Ascending aorta (tissue), 2 donors: ENCODE measurements at regions of chr15 and their contacts with region 1.

Region 1: GRCh38 chr15:46365572-46365971 is 730.7 kb downstream of the SQOR start:
- DNase-seq: peak in 1 of 2 donors; percentile 84
- H3K4me3 ChIP-seq: peak overlapping the region; percentile 29 to 51
- H3K27ac ChIP-seq: peak overlapping the region; percentile 76 to 77
- H3K4me1 ChIP-seq: peaks cover 0 to 16% of the 10 kb centered on the region in 2 donors
- H3K27me3 ChIP-seq: no peaks in the 10 kb centered on the region
- CTCF ChIP-seq: no peak

Region 2: DNA sequence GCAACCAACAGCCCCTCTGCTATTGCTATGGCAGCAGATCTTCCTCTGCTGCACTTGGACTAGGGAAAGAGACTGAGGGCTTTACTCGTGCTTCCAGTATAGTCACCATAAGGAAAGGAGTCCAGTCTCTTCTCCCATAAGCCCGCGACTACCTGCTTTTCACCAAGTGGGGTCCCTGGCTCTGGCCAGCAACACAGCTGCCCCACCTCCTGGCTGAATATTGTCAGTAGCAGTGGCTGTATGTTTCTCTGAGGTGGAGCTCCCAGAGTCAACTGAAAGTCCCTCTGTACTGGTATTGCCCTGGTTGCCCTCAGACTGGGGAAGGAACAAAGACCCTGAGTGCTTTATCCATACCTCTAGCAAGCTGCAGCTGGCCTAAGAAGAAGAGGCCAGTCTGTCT is 11.1 kb before region 1 on chr15:
- intact Hi-C with region 1: no loop called
- DNase-seq: no peak
- H3K4me3 ChIP-seq: no peak overlapping the region
- H3K27ac ChIP-seq: no peak overlapping the region
- H3K4me1 ChIP-seq: no peaks in the 10 kb centered on the region
- H3K27me3 ChIP-seq: no peaks in the 10 kb centered on the region
- CTCF ChIP-seq: no peak

Region 3: DNA sequence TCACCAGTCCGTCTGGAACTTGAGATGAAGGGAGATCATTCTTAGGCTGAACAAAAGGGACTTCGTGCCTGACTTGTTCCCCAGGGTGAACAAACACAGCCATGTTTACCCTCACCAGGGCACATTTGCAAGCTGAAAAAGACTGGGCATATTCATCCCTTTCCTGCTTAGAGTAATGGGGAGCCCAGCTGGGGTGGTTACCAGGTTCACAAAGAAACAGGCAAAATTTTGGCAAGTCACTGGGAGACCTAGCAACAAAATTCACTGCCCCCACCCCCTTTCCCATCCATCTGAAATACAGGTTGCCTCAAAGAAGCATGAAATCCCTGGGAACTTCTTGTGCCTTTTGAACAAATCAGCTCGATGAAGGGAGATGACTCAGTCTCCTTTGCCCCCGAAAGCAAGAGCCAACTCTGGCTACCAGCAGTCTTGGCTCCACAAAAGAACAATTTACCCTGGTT is 44.3 kb after region 1 on chr15:
- intact Hi-C with region 1: loop called (anchors 5 kb)
- DNase-seq: no peak
- H3K4me3 ChIP-seq: no peak overlapping the region
- H3K27ac ChIP-seq: peak overlapping the region in 1 of 2 donors; percentile 73
- H3K4me1 ChIP-seq: peaks cover 7 to 10% of the 10 kb centered on the region in 2 donors
- H3K27me3 ChIP-seq: no peaks in the 10 kb centered on the region
- CTCF ChIP-seq: no peak